WTC11 (cell line): ENCODE measurements at regions of chr12 and their contacts with region 1.

Region 1: GRCh38 chr12:13044002-13044905 is at the start of gene FAM234B:
- DNase-seq: peak; percentile 84
- ATAC-seq: peak; percentile 92
- H3K4me3 Mint-ChIP-seq: peak within 1 kb of the TSS; percentile 85
- H3K27ac Mint-ChIP-seq: no peak within 1 kb of the TSS
- H3K4me1 Mint-ChIP-seq: peaks cover 37% of the 10 kb centered on the region
- H3K27me3 Mint-ChIP-seq: peaks cover 15% of the 10 kb centered on the region
- CTCF ChIP-seq: no peak
- total RNA-seq, gene FAM234B: 25.9 to 28.6 TPM (median 26.2 TPM) in 3 replicates

Region 2: DNA sequence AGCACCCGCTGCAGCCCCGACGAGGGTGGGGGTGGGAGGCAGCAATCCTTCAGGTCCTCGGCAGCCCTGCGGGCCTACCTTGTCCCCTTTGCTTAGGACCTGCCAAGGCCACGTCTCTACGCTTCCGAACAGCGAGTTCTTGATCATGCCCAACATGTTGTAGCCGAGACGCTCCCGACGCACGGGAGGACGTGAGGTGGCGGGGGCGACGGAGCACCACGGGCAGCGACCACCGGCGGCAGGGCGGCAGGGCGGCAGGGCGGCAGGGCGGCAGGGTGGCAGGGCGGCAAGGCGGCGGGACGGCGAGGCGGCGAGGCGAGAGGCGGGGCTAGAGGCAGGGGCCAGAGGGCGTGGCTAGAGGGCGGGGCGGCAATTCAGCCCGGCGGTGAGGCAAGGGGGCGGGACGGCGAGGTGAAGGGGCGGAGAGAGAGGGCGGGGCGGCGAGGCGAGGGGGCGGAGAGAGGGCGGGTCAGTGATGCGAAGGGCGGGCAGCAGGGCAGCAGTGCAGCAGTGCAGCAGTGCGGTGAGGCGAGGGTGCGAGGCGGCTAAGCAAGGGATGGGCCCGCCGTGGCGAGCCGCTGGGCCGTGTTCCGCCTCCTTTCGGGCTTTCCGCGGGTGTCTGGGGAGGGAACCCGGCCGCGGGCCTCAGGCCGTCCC is 44.2 kb before region 1 on chr12 and contains the start of gene HEBP1:
- CTCF ChIA-PET with region 1: no interaction called
- POLR2A ChIA-PET with region 1: no interaction called
- DNase-seq: peak; percentile 95
- ATAC-seq: peak; percentile 88
- H3K4me3 Mint-ChIP-seq: peak within 1 kb of the TSS; percentile 96
- H3K27ac Mint-ChIP-seq: peak within 1 kb of the TSS; percentile 67; the same call in 1 of the 2 replicates
- H3K4me1 Mint-ChIP-seq: peaks cover 53% of the 10 kb centered on the region
- H3K27me3 Mint-ChIP-seq: peaks cover 32% of the 10 kb centered on the region
- CTCF ChIP-seq: no peak
- total RNA-seq, gene HEBP1: 61.6 to 62.7 TPM (median 61.8 TPM) in 3 replicates

Region 3: DNA sequence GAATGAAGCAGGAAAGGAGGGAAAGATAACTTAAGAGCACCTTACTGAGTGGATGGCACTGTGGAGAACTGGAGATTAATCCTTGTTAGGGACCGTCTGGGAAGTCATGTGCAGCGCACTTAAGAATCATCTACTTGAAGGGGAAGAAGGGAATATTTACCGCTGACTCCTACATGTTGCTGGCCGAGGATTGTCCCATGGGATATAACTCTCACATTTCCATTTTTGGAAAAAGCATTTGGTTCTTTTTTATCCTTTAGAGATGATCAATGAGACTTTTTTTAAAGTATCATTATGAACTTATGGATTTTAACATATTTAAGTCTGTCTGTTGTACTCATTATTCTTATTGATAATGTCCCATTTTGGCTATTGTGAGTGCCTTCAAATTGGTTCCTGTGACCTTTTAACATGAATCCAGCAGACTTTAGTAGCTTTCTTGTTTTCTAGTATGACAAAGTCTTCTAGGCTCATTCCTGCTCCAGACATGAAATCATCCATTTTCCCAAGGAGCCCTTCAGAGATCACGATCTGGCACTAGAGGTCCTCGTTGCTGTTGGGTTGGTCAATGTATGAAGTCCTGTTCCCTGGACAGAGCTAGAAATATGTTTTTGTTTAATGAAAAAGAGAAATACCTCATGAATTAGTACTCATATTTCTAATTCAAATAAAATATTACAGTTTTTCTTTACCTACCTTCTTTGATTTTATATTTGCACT is 20.3 kb before region 1 on chr12:
- CTCF ChIA-PET with region 1: interaction called, 19 read pairs
- POLR2A ChIA-PET with region 1: no interaction called
- DNase-seq: no peak
- ATAC-seq: peak; percentile 76
- H3K4me3 Mint-ChIP-seq: no peak overlapping the region
- H3K27ac Mint-ChIP-seq: no peak overlapping the region
- H3K4me1 Mint-ChIP-seq: peaks cover 8% of the 10 kb centered on the region
- H3K27me3 Mint-ChIP-seq: no peaks in the 10 kb centered on the region
- CTCF ChIP-seq: no peak

Region 4: DNA sequence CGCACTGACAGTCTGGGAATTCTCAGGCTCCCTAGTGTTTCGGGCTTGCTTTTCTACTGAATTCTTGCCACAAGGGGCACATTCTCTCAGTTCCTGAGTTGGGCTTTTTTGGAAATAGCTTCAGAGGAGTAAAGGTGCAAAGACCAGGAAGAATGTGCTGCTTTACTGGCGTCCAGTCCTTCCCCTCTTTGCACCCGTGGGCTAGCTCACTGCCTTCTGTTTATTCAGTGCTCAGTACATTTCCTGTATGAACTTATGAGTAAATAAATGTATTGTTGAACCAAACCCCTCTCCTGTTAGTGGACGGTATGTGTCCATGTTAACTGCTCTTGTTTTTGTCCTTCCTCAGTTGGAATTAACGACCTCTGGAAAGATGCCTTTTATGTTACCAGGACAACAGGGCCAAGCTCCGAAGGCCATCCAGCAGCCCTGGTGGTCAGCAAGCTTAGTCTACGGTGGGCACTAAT is 35.2 kb after region 1 on chr12:
- CTCF ChIA-PET with region 1: interaction called, 19 read pairs
- POLR2A ChIA-PET with region 1: no interaction called
- DNase-seq: no peak
- ATAC-seq: peak; percentile 95
- H3K4me3 Mint-ChIP-seq: no peak overlapping the region
- H3K27ac Mint-ChIP-seq: peak overlapping the region; percentile 70
- H3K4me1 Mint-ChIP-seq: peaks cover 13% of the 10 kb centered on the region
- H3K27me3 Mint-ChIP-seq: no peaks in the 10 kb centered on the region
- CTCF ChIP-seq: no peak

Region 5: DNA sequence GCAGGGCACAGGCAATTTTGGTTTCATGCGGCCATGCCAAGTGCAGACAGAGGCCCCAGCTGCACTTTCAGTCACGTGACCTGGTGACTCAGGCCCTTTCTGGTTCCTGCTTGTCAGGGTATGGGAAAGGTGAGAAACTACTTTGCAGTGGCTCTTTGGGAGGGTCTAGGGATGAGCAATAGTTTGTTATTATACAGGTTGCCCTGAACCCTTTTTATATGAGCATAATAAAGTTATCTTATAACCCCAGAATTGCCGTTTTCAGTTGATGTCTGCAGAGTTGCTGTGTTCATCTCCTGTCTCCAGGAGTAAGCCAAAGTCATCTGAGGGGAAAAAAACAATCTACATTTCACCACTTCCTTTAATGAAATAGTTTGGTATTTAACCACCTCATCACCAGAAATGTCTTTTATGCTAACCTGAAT is 121.4 kb after region 1 on chr12:
- CTCF ChIA-PET with region 1: no interaction called
- POLR2A ChIA-PET with region 1: no interaction called
- DNase-seq: no peak
- ATAC-seq: peak; percentile 26; the same call in 1 of the 2 replicates
- H3K4me3 Mint-ChIP-seq: no peak overlapping the region
- H3K27ac Mint-ChIP-seq: no peak overlapping the region
- H3K4me1 Mint-ChIP-seq: peaks cover 2% of the 10 kb centered on the region; the same call in 1 of the 2 replicates
- H3K27me3 Mint-ChIP-seq: no peaks in the 10 kb centered on the region
- CTCF ChIP-seq: no peak

Region 6: DNA sequence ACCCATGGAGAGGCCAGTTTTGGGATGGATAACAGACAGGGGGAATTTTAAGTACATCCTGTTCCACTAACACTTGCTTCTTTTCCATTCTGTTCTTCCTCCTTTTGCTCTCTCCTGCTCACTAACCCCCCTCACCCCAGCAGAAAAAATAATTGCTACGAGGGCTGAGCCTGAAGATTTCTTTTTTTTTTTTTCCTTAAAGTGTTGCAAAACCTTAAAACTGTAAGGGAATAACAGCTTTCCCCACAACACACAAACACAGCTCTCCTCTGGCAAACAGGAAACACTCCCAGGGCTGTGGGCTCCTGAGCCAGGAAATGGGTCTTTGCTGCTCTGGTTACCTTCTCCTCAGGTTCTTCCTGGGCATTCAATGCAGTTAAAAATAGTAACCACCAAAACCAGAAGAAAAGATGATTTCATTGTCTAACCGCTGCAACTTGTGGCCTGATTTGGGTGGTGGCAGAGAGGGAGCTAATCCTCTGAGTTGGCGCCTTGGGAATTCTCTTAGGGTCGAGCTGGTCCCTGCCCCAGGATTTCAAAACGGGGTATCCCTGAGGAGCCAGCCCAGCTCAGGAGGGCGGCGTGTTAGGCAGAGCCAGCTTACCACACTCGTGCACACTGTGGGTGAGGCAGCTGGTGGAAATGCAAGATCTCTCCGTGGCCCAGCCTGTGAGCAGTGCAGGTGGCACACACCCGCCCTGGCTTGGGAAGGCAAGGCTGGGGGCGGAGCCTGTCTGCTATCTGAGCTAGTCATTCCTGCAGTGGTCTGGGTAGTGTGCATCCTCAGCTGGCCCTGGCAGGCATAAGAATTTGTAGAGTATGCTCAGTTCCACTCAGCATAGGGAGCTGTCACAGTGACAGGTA is 135.2 kb after region 1 on chr12:
- CTCF ChIA-PET with region 1: interaction called, 10 read pairs
- POLR2A ChIA-PET with region 1: no interaction called
- DNase-seq: peak; percentile 68
- ATAC-seq: peak; percentile 97
- H3K4me3 Mint-ChIP-seq: peak overlapping the region; percentile 40
- H3K27ac Mint-ChIP-seq: peak overlapping the region; percentile 88
- H3K4me1 Mint-ChIP-seq: peaks cover 39% of the 10 kb centered on the region
- H3K27me3 Mint-ChIP-seq: no peaks in the 10 kb centered on the region
- CTCF ChIP-seq: no peak